GM12878 (cell line): ENCODE measurements at regions of chr14 and their contacts with region 1.

Region 1: GRCh38 chr14:105045710-105046326 is 19.4 kb downstream of the GPR132 start:
- DNase-seq: no peak
- ATAC-seq: peak; percentile 84
- H3K4me3 ChIP-seq: no peak overlapping the region
- H3K27ac ChIP-seq: no peak overlapping the region
- H3K4me1 ChIP-seq: peaks cover 7% of the 10 kb centered on the region
- H3K27me3 ChIP-seq: no peaks in the 10 kb centered on the region
- CTCF ChIP-seq: peak; percentile 99 to 100 (median 100); a peak in 5 of 6 replicates
- EP300 ChIP-seq: no peak
- POLR2A ChIP-seq: peak; percentile 75
- RAD21 ChIP-seq: peak; percentile 91

Region 2: GRCh38 chr14:104800015-104800770 is 245.6 kb before region 1 on chr14:
- CTCF ChIA-PET with region 1: no interaction called
- POLR2A ChIA-PET with region 1: no interaction called
- RAD21 ChIA-PET with region 1: no interaction called
- SMC1A ChIA-PET with region 1: no interaction called
- in situ Hi-C with region 1: no loop called
- intact Hi-C with region 1: no loop called
- DNase-seq: no peak
- ATAC-seq: peak; percentile 75
- H3K4me3 ChIP-seq: no peak overlapping the region
- H3K27ac ChIP-seq: no peak overlapping the region
- H3K4me1 ChIP-seq: peaks cover 17% of the 10 kb centered on the region
- H3K27me3 ChIP-seq: peaks cover 0 to 3% of the 10 kb centered on the region in 2 experiments; a peak in 2 of 4 replicates
- CTCF ChIP-seq: peak in 1 of 3 experiments; percentile 41; a peak in 2 of 6 replicates
- EP300 ChIP-seq: no peak
- POLR2A ChIP-seq: no peak
- RAD21 ChIP-seq: no peak

Region 3: DNA sequence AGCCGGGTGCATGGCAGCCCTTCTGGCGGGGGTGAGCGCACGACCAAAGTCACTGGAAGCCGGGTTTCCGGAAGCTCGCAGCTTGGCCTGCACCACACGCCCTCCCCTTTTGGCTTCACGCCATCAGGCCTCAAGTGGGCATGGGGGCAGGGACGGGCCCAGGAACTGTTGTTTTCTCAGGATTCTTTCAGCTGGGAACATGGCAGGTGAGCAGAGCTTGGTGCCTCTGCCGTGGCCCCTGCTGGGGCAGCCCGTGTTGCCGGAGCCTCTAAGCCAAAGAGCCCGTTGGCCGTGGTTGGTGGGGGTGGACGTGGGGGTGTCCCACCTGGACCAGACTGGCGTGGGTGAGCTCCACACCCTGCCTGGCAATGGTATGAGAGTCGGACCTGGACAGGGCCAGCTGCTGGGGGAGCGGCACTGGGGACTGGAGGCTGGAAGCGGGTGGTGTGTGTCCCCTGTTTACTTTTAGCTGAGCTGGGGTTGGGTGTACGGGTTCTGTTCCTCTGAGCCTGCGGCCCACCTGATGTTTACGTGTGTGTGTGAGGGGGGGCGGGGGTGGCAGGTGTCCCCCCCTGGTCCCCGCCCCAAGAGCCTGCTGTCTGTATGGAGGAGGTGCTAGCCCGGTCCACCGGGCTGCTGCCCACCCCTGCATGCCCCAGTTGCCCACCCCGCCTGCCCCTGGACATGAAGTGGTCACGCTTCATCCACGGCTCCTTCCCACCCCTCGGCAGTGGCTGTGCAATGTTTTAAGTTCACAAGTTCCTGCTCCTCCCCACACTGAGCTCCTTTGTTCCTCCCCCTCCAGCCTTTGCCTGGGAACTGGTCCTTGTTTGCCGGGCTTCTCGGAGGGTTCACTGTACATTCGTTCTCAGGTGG is 149.8 kb before region 1 on chr14:
- CTCF ChIA-PET with region 1: interaction called, 13 read pairs
- POLR2A ChIA-PET with region 1: no interaction called
- RAD21 ChIA-PET with region 1: interaction called, 3 read pairs
- SMC1A ChIA-PET with region 1: interaction called, 3 read pairs
- in situ Hi-C with region 1: loop called (anchors 10 kb)
- intact Hi-C with region 1: loop called (anchors 5 kb)
- DNase-seq: no peak
- ATAC-seq: no peak
- H3K4me3 ChIP-seq: no peak overlapping the region
- H3K27ac ChIP-seq: no peak overlapping the region
- H3K4me1 ChIP-seq: no peaks in the 10 kb centered on the region; the same call in 1 of the 2 replicates
- H3K27me3 ChIP-seq: peaks cover 0 to 3% of the 10 kb centered on the region in 2 experiments; a peak in 1 of 4 replicates
- CTCF ChIP-seq: no peak
- EP300 ChIP-seq: no peak
- POLR2A ChIP-seq: no peak
- RAD21 ChIP-seq: no peak

Region 4: GRCh38 chr14:104985675-104986525 is 59.9 kb before region 1 on chr14 and contains the start of gene CLBA1:
- CTCF ChIA-PET with region 1: interaction called, 7 read pairs
- POLR2A ChIA-PET with region 1: no interaction called
- RAD21 ChIA-PET with region 1: interaction called, 13 read pairs
- SMC1A ChIA-PET with region 1: no interaction called
- in situ Hi-C with region 1: loop called (anchors 5 kb)
- intact Hi-C with region 1: no loop called
- DNase-seq: peak; percentile 55
- ATAC-seq: peak; percentile 97
- H3K4me3 ChIP-seq: peak within 1 kb of the TSS; percentile 74
- H3K27ac ChIP-seq: no peak within 1 kb of the TSS
- H3K4me1 ChIP-seq: no peaks in the 10 kb centered on the region
- H3K27me3 ChIP-seq: no peaks in the 10 kb centered on the region; a peak in 1 of 4 replicates
- CTCF ChIP-seq: no peak
- EP300 ChIP-seq: no peak
- POLR2A ChIP-seq: 0 out of 2 replicates have a peak, but pooled peaks have one; percentile 44
- RAD21 ChIP-seq: no peak
- polyA plus RNA-seq, gene CLBA1: 0.07 TPM in 1 of 2 experiments, not detected in the other

Region 5: GRCh38 chr14:105020815-105021655 is 24.8 kb before region 1 on chr14 and contains the start of gene CDCA4:
- CTCF ChIA-PET with region 1: interaction called, 28 read pairs
- POLR2A ChIA-PET with region 1: no interaction called
- RAD21 ChIA-PET with region 1: interaction called, 18 read pairs
- SMC1A ChIA-PET with region 1: interaction called, 13 read pairs
- in situ Hi-C with region 1: no loop called
- intact Hi-C with region 1: loop called (anchors 2 kb)
- DNase-seq: peak; percentile 66
- ATAC-seq: peak; percentile 78
- H3K4me3 ChIP-seq: peak within 1 kb of the TSS; percentile 89
- H3K27ac ChIP-seq: peak within 1 kb of the TSS; percentile 93
- H3K4me1 ChIP-seq: peaks cover 19% of the 10 kb centered on the region
- H3K27me3 ChIP-seq: no peaks in the 10 kb centered on the region
- CTCF ChIP-seq: no peak
- EP300 ChIP-seq: no peak
- POLR2A ChIP-seq: peak; percentile 87
- RAD21 ChIP-seq: no peak
- polyA plus RNA-seq, gene CDCA4: 10.4 to 16.1 TPM

Region 6: GRCh38 chr14:105059035-105059924 is 13.5 kb after region 1 on chr14:
- CTCF ChIA-PET with region 1: interaction called, 20 read pairs
- POLR2A ChIA-PET with region 1: interaction called, 3 read pairs
- RAD21 ChIA-PET with region 1: interaction called, 4 read pairs
- SMC1A ChIA-PET with region 1: interaction called, 5 read pairs
- in situ Hi-C with region 1: no loop called
- intact Hi-C with region 1: no loop called
- DNase-seq: no peak
- ATAC-seq: no peak
- H3K4me3 ChIP-seq: peak overlapping the region; percentile 71; the same call in 1 of the 2 replicates
- H3K27ac ChIP-seq: peak overlapping the region; percentile 93; the same call in 1 of the 2 replicates
- H3K4me1 ChIP-seq: peaks cover 33% of the 10 kb centered on the region
- H3K27me3 ChIP-seq: no peaks in the 10 kb centered on the region
- CTCF ChIP-seq: peak in 2 of 3 experiments; percentile 7 to 30; a peak in 2 of 6 replicates
- EP300 ChIP-seq: no peak
- POLR2A ChIP-seq: peak; percentile 7; the same call in 1 of the 2 replicates
- RAD21 ChIP-seq: no peak

Region 7: GRCh38 chr14:105075379-105076295 is 29.8 kb after region 1 on chr14:
- CTCF ChIA-PET with region 1: interaction called, 13 read pairs
- POLR2A ChIA-PET with region 1: interaction called, 3 read pairs
- RAD21 ChIA-PET with region 1: interaction called, 4 read pairs
- SMC1A ChIA-PET with region 1: interaction called, 5 read pairs
- in situ Hi-C with region 1: no loop called
- intact Hi-C with region 1: no loop called
- DNase-seq: no peak
- ATAC-seq: peak; percentile 88
- H3K4me3 ChIP-seq: no peak overlapping the region
- H3K27ac ChIP-seq: peak overlapping the region; percentile 38
- H3K4me1 ChIP-seq: peaks cover 33% of the 10 kb centered on the region
- H3K27me3 ChIP-seq: no peaks in the 10 kb centered on the region
- CTCF ChIP-seq: 0 out of 6 replicates have a peak, but pooled peaks of 1 of the 3 experiments have one; percentile 3
- EP300 ChIP-seq: no peak
- POLR2A ChIP-seq: no peak
- RAD21 ChIP-seq: no peak